Heart right ventricle (tissue), 16 donors: ENCODE measurements at regions of chr21 and their contacts with region 1.

Region 1: GRCh38 chr21:44817506-44817880 is 369 bp downstream of the SUMO3 start:
- DNase-seq: peak; percentile 92 to 96
- ATAC-seq: peak; percentile 91 to 97 (median 95)
- H3K4me3 ChIP-seq: peak overlapping the region; percentile 52 to 97 (median 82)
- H3K27ac ChIP-seq: peak overlapping the region; percentile 37 to 99 (median 96)
- H3K4me1 ChIP-seq: peaks cover 9 to 44% (median 25%) of the 10 kb centered on the region in 9 donors
- H3K27me3 ChIP-seq: no peaks in the 10 kb centered on the region
- CTCF ChIP-seq: peak in 1 of 9 donors; percentile 13

Region 2: DNA sequence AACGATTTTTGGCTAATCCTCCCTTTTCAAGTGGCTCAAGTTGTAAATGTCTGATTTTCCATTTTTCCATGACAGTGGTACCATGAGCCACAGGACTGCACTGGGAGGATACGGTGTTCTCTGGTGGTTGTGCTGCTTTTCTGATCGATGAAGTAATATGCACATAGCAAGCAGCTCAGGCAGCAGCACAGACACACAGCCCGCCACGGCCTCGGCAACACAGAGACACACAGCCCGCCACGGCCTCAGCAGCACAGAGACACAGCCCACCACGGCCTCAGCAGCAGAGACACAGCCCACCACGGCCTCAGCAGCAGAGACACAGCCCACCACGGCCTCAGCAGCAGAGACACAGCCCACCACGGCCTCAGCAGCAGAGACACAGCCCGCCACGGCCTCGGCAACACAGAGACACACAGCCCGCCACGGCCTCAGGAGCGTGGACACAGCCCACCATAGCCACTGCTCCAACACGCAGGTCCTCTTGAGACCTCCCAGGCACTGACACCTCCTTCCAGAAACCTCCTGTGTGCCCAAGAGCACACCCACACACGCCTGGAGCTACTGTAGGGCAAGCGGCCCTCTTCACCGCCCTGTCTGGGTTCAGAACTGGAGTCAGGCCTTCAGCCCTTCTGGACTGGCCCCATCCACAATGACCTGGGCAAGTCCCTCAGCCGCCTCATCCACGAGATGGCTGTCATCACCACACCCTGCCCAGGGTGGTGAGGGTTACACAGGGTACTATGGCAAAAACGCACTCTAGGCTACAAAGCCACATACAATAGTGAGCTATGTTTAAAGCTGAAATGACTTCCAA is 45.6 kb after region 1 on chr21:
- intact Hi-C with region 1: loop called in 1 of 10 experiments (anchors 5 kb)
- DNase-seq: peak in 1 of 2 donors; percentile 4
- ATAC-seq: no peak
- H3K4me3 ChIP-seq: no peak overlapping the region
- H3K27ac ChIP-seq: no peak overlapping the region
- H3K4me1 ChIP-seq: peaks cover 14 to 64% (median 44%) of the 10 kb centered on the region in 9 donors
- H3K27me3 ChIP-seq: no peaks in the 10 kb centered on the region
- CTCF ChIP-seq: no peak

Region 3: DNA sequence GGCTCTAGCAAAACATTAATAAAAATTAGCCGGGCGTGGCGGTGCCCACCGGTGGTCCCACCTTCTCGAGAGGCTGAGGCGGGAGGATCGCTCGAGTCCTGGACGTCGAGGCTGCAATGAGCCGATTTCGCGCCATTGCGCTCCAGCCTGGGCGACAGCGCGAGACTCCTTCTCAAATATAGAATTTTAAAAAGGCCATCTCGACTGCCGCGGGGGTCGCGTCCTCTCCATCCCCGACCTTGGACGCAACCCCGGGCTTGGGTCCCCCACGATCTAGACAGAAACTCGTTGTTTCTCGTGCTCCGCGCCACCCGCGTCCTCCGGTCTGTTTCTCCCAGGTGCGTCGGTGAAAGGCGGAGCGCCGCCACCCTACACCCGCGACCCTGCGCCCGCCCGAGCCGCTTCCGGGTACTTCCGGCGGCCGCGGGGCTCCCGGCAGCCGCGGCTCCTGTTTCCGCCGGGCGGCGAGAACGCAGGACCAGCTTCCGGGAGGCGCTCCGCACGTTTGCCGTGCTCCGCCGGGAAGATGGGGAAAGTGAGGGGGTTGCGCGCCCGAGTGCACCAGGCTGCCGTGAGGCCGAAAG is 122.1 kb after region 1 on chr21 and contains the start of gene SLX9:
- intact Hi-C with region 1: loop called in 2 of 10 experiments (anchors 10 kb)
- DNase-seq: peak; percentile 66 to 83
- ATAC-seq: peak; percentile 82 to 95 (median 88)
- H3K4me3 ChIP-seq: peak within 1 kb of the TSS; percentile 75 to 97 (median 87)
- H3K27ac ChIP-seq: peak within 1 kb of the TSS in 9 of 10 donors; percentile 70 to 88 (median 80)
- H3K4me1 ChIP-seq: peaks cover 3 to 41% (median 30%) of the 10 kb centered on the region in 9 donors
- H3K27me3 ChIP-seq: peaks cover 0 to 6% (median 0%) of the 10 kb centered on the region in 7 donors
- CTCF ChIP-seq: peak in 1 of 9 donors; percentile 4
- total RNA-seq, gene SLX9: 42.4 to 67.2 (median 52.6) TPM

Region 4: DNA sequence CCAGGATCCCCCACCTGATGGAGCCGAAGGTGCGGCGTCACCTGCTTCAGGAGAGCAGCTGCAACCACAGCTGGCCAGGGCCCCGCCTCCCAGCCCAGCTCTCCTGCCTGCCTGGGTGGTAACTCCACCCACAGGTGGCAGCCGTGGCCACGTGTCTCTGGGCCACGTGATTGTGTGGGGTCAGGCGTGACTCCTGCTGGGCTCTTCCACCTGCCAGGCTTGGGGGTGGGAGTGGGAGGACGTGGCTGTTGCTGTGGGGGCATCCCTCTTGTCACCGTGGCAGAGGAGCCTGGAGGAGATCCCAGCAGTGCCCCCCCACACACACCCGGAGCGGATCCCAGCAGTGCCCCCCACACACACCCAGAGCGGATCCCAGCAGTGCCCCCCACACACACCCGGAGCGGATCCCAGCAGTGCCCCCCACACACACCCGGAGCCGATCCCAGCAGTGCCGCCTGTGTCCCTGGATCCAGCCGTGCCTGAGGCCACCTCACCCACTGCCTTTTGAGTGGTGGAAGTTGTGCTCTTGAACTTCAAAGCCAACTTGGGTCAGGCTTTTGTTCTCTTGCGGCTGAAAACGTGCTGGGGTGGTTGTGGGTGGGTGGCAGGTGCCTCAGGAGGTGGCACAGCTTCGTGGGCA is 438.0 kb after region 1 on chr21:
- intact Hi-C with region 1: loop called in 1 of 10 experiments (anchors 5 kb)
- DNase-seq: no peak
- ATAC-seq: no peak
- H3K4me3 ChIP-seq: no peak overlapping the region
- H3K27ac ChIP-seq: no peak overlapping the region
- H3K4me1 ChIP-seq: peaks cover 0 to 14% (median 7%) of the 10 kb centered on the region in 9 donors
- H3K27me3 ChIP-seq: peaks cover 0 to 44% (median 30%) of the 10 kb centered on the region in 7 donors
- CTCF ChIP-seq: no peak